ENCODE measurements at regions of chr14 and their contacts with region 1.

Region 1: DNA sequence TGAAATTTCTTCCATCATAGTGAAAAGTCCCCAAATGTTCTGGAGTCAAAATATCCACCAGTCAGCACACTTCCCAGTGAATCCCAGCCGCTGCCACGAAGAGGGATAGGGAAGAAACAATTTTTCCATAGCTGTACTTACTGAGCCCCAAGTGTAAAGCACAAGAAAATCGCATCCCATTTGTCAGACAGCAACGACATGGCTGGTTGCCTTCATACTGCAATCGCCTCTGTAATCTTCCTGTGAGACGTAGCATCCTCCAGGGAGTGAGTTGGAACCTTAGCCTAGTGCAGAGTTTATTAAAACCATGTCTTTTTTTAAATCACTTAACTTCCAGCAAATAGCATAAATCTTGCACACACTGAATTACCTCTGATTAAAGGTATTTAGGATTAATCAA is 56.8 kb downstream of the GNG2 start:
- DNase-seq: peak in 1 of 2 donors; percentile 32
- ATAC-seq: peak in 6 of 8 donors; percentile 50 to 72 (median 66)
- H3K4me3 ChIP-seq: no peak overlapping the region
- H3K27ac ChIP-seq: peak overlapping the region in 5 of 10 donors; percentile 19 to 65 (median 34)
- H3K4me1 ChIP-seq: peaks cover 0 to 21% (median 0%) of the 10 kb centered on the region in 9 donors
- H3K27me3 ChIP-seq: no peaks in the 10 kb centered on the region
- CTCF ChIP-seq: no peak

Region 2: DNA sequence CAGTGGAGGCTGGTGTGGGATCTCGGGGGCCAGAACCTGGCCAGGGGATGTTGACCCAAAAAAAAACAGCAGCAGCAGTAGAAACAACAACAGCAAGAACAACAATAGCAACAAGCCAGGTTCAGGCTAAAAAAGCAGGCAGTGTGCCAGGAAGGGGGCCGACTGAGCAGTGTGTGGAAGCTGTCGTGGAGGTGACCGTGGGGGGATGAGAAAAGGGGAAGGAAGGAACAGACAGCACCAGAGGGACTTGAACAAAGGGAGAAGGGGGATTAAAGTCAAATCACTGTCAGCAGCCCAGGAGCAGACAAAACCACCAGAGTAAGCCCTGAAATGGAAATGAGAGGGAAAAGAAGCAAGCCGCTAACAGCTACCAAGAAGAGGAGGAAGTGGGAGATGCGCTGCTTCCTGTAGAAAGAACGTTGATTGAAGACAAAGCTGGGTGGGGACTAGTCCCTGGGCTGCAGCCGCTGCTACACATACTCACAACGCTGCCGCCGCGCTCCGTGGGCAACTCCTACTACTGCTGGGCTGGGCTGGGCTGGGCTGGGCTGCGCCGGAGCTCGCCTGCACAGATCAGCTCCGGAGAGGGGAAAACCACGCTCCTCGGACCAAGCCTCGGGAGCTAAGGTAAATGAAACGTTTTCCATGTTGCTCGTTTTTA is 56.9 kb before region 1 on chr14 and contains the start of gene GNG2:
- intact Hi-C with region 1: no loop called
- DNase-seq: peak; percentile 78 to 85
- ATAC-seq: peak; percentile 97 to 99 (median 98)
- H3K4me3 ChIP-seq: peak within 1 kb of the TSS; percentile 20 to 69 (median 54)
- H3K27ac ChIP-seq: peak within 1 kb of the TSS in 9 of 10 donors; percentile 24 to 92 (median 52)
- H3K4me1 ChIP-seq: peaks cover 0 to 84% (median 7%) of the 10 kb centered on the region in 9 donors
- H3K27me3 ChIP-seq: peaks cover 0 to 9% (median 0%) of the 10 kb centered on the region in 7 donors
- CTCF ChIP-seq: no peak
- total RNA-seq, gene GNG2: 3.6 to 20.6 (median 8.0) TPM

Region 3: DNA sequence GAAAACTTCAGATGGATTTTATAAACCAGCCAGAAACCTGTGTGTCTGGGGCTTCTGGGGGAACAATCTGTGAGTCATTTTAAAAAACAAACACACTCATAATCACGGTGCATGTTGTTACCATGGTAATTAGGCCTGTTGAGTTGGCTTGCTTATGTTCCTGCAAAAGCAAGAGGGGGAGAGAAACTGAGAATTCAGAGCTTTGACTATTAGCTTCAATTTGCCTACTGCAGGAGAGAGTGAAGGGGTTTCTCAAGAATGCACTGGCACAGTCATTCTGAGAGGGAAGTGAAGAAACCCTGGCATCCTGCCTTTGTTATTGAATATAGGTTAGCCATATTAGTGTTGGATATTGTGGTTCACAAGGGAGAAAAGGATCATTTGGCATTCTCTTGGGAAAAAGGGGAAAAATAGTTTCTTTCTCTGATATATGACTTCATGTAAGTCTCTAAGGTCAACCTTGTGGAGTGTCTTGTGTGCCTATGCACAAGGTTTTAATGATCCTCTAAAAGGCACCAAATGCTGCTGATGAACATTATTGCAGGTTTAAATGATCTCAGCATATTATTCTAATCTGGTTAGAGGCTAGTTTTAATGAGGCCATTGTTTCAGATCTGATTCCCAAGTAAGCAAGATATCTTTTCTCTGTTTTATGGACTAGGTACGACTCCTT is 43.8 kb before region 1 on chr14:
- intact Hi-C with region 1: loop called in 1 of 10 experiments (anchors 5 kb)
- DNase-seq: no peak
- ATAC-seq: peak in 7 of 8 donors; percentile 33 to 71 (median 58)
- H3K4me3 ChIP-seq: no peak overlapping the region
- H3K27ac ChIP-seq: peak overlapping the region in 5 of 10 donors; percentile 1 to 74 (median 19)
- H3K4me1 ChIP-seq: peaks cover 0 to 54% (median 13%) of the 10 kb centered on the region in 9 donors
- H3K27me3 ChIP-seq: no peaks in the 10 kb centered on the region
- CTCF ChIP-seq: no peak

Measured in heart right ventricle (tissue), 16 donors.